Right ventricle myocardium inferior (tissue), 1 donor: ENCODE measurements at regions of chr10 and their contacts with region 1.

Region 1: GRCh38 chr10:75235375-75236177 is at the start of gene COMTD1:
- DNase-seq: peak; percentile 98
- ATAC-seq: peak; percentile 83
- total RNA-seq, gene COMTD1: 32.3 TPM

Region 2: DNA sequence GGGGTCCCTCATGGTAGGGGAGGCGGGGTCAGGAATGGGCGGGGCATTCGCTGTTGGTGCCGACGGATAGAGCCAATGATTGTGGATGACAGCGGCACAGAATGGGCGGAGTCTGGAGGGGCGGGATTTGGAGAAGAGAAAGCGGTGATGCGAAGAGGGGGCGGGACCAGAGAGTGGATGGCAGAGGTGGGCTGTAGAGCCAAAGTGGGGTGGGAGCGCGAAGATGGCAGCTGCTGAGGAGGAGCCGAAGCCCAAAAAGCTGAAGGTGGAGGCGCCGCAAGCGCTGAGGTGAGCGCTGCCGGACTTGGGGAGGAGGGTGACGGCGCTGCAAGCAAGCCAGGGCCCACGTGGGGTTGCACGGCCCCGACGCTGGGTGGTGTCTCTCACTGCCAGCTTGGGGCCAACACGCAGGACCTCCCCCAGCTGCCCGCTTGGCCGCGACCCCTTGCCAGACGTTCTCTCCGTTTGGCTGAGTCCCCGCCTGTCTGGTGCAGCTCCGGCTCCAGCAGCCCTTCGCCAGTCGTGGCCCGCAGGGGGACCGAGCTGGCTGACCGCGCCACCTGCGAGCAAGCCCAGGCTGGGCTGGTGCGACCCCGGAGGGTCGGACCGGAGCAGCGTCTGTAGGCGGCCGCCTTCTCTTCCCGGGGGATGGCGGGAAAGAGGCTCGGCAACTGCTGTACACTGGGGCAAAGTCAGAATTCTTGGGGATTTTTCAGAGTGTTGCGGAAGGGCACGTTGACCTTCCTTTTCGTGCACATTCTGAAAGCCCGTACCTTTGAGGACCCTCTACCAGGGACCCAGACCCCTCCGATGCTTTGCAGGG is 1084.3 kb before region 1 on chr10 and contains the start of gene ADK:
- intact Hi-C with region 1: loop called (anchors 10 kb)
- DNase-seq: peak; percentile 100
- ATAC-seq: peak; percentile 98
- total RNA-seq, gene ADK: 41.4 TPM

Region 3: DNA sequence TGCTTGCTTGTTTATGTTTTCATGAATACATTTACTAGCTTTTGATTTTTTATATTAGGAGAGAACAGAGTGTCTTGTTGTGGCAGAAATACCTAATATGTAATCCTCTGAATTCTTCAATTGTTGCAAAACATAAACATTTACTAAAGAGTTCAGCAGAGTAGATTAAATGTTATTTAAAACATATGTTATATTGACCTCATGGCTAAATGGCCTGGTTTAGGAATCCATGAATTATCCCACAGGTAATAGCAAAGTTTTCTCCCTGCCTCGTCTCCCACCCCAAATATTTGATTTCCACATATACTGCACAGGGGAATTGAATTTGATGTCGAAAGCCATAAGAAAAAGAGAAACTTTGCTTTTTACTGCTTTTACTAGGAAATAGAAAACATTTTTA is 972.7 kb before region 1 on chr10:
- intact Hi-C with region 1: loop called (anchors 5 kb)
- DNase-seq: no peak
- ATAC-seq: no peak

Region 4: DNA sequence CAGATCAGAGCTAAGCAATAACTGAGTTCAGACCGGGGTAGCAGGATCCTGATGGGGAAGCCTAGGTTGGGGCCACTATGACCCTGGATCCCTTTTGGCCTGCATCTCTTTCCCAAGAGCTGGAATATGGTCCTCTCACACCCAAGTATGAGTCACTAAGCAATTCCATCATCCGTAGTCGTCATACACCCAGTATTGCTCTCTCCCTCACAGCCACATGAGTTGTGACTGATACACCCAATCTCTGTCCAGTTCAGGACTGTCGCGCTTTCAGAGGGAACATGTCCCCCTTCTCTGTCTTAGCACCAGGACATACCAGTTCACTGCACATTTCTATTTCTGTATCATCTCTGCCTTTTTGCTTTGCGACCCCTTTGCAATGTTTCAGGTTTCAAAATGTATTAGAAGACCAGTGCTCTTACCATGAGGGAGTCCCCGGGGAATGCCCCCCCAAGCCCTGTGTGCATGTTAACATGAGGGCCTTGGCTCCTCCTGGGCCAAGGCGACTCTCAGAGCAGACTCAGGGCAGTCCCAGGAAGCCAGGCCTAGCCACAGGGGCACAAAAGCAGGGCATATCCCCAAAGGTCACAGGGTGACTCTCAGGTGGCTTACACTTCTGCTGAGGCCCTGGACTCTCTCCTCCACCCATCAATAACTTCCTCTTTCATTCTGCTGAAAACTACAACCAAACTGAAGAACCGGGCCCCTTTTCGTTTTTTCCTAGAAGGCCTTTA is 199.4 kb before region 1 on chr10:
- intact Hi-C with region 1: loop called (anchors 10 kb)
- DNase-seq: no peak
- ATAC-seq: no peak

Region 5: DNA sequence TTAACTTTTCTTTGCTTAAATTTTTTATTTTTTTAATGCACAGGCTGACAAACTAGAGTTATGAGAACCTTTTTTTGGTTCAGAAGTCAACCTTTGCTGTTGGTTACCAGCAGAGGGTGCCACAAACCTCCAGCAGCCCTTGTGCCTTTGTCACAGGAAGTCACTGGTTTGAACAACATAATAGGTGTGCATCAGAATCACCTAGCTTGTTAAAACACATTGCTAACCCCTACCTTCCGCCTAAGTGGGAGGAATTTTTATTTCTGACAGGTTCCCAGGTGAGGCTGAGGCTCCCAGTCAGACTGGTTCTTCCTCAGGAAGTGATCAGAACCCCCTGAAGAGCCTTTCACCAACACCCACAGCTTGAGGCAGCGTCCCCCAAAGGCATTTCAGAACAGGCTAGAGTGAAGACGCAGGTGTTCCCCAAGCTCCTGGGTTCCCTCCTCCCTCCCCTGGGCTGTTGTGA is 47.6 kb before region 1 on chr10:
- intact Hi-C with region 1: loop called (anchors 2 kb)
- DNase-seq: no peak
- ATAC-seq: peak; percentile 26